CD4-positive, alpha-beta memory T cell (primary cell): ENCODE measurements at regions of chr6 and their contacts with region 1.

Region 1: GRCh38 chr6:32580593-32580992 is 9.1 kb downstream of the HLA-DRB1 start:
- DNase-seq: no peak
- H3K4me3 ChIP-seq: no peak overlapping the region
- H3K4me3 Mint-ChIP-seq: no peak overlapping the region
- H3K27ac ChIP-seq: no peak overlapping the region
- H3K27ac Mint-ChIP-seq: no peak overlapping the region
- H3K4me1 ChIP-seq: peaks cover 4% of the 10 kb centered on the region
- H3K4me1 Mint-ChIP-seq: peaks cover 9 to 16% (median 13%) of the 10 kb centered on the region in 4 donors
- H3K27me3 ChIP-seq: no peaks in the 10 kb centered on the region
- H3K27me3 Mint-ChIP-seq: peaks cover 2 to 7% of the 10 kb centered on the region in 2 donors

Region 2: DNA sequence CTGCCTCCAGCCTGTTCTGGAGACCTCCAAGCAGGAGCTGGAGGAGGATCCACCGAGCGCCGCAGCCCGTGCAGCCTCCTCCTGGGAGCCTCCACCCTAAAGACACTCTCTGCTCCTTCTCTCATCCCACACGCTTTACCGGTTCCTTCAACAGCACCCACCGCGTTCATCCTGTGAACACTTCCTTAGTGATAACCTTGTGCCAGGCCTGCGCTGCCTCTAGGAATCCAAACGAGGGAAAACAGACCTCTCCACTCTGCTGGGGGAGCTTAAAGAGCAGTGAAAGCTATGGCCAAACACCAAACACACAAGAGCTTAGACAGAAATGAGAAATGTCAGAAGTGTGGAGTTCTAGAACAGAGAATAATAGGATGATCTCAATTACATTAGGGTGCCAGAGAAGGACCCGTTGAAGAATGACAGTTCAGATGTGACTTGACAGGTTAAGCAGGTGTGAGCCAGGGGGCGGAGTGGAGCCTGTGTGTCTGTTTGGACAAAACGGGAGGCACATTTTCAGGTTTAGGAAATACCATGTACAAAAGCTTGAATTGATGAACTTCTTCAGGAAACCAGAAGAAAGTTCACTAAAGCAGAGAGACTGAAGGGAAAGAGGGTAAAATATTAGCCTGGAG is 22.1 kb before region 1 on chr6:
- CTCF ChIA-PET with region 1: no interaction called
- POLR2A ChIA-PET with region 1: no interaction called
- intact Hi-C with region 1: loop called (anchors 1 kb)
- DNase-seq: no peak
- H3K4me3 ChIP-seq: no peak overlapping the region
- H3K4me3 Mint-ChIP-seq: peak overlapping the region in 2 of 8 donors; percentile 35 to 39
- H3K27ac ChIP-seq: no peak overlapping the region
- H3K27ac Mint-ChIP-seq: peak overlapping the region in 1 of 7 donors; percentile 56
- H3K4me1 ChIP-seq: no peaks in the 10 kb centered on the region
- H3K4me1 Mint-ChIP-seq: peaks cover 0 to 5% (median 2%) of the 10 kb centered on the region in 4 donors
- H3K27me3 ChIP-seq: no peaks in the 10 kb centered on the region
- H3K27me3 Mint-ChIP-seq: peaks cover 2 to 13% of the 10 kb centered on the region in 2 donors

Region 3: DNA sequence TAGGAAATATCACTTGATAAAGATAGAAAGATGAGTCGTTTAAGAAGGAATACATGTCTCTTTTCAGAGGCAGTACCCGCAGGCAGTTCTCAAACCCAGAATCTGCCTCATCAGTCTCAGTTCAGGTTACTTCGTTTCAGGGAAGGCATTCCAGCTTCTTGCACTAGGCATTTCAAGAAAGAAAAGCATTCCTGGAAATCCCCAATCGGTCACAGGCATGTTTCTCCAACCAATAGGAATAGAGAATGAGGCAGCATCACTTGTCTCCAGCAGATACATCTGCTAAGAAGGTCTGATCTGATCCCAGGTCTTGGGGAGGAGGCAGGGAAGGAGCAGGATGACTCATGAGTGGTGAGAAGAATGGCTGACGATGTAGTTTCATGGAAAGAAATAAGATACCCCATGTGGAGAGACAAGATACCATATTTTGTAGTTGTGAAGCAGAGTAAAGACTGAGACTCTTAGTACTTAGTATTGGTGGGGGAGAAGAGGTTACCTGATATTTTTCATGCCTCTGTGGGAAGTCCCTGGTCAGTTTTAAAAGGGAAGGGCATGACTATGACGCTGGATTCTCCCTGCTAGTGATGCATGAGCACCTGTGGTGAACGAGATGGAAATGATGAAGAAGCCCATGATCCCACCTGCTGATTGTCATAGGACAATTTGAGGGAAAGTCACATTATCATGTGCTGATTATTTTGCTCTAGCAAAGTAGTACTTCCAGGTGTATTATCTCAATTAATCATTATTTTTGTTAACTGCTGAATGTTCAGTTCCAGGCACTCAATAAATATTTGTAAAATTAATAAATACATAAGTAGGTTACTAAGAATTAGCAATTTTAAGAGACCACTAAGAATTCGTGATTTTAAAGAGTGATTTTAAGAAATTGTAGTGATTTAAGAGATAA is 29.4 kb after region 1 on chr6:
- CTCF ChIA-PET with region 1: no interaction called
- POLR2A ChIA-PET with region 1: no interaction called
- intact Hi-C with region 1: loop called (anchors 1 kb)
- DNase-seq: peak; percentile 61 to 77 (median 71)
- H3K4me3 ChIP-seq: peak overlapping the region in 1 of 2 donors; percentile 12
- H3K4me3 Mint-ChIP-seq: no peak overlapping the region
- H3K27ac ChIP-seq: peak overlapping the region; percentile 67
- H3K27ac Mint-ChIP-seq: peak overlapping the region in 1 of 7 donors; percentile 50
- H3K4me1 ChIP-seq: peaks cover 15% of the 10 kb centered on the region
- H3K4me1 Mint-ChIP-seq: peaks cover 0 to 5% (median 2%) of the 10 kb centered on the region in 4 donors
- H3K27me3 ChIP-seq: no peaks in the 10 kb centered on the region
- H3K27me3 Mint-ChIP-seq: no peaks in the 10 kb centered on the region